ENCODE measurements at regions of chr2 and their contacts with region 1.

Region 1: DNA sequence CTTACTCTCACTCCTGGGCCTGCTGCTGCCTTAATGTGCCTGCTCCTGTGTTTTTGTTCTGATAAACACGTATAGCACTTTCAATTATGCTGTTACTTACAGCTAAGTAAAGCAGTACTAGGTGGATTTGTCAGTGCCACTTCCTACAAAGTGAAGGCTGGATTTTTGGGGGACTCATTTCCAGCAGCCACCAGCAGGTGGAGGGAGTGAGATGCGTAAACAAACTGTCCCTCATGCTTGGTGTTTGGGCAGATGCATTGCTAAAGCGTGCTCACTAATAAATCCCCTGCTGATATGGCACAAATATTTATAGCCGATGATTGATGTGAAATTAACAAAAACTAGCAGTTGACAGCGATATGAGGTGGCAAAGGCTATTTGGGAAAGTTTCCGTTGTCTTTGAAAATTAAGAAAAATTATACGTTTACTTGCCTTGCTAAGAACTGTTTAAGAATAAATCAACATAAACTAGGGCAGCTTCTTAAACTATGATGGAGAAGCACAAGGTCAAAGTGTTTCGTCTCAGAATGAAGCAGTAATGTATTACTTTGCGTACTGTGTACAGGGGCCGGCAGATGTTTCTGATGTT is 101.7 kb downstream of the AGAP1 start:
- DNase-seq: no peak
- H3K4me3 ChIP-seq: no peak overlapping the region
- CTCF ChIP-seq: peak; percentile 87

Region 2: GRCh38 chr2:235116885-235117492 is 478.5 kb before region 1 on chr2:
- CTCF ChIA-PET with region 1: interaction called, 16 read pairs
- POLR2A ChIA-PET with region 1: no interaction called
- DNase-seq: no peak
- H3K4me3 ChIP-seq: no peak overlapping the region
- CTCF ChIP-seq: peak; percentile 22

Region 3: DNA sequence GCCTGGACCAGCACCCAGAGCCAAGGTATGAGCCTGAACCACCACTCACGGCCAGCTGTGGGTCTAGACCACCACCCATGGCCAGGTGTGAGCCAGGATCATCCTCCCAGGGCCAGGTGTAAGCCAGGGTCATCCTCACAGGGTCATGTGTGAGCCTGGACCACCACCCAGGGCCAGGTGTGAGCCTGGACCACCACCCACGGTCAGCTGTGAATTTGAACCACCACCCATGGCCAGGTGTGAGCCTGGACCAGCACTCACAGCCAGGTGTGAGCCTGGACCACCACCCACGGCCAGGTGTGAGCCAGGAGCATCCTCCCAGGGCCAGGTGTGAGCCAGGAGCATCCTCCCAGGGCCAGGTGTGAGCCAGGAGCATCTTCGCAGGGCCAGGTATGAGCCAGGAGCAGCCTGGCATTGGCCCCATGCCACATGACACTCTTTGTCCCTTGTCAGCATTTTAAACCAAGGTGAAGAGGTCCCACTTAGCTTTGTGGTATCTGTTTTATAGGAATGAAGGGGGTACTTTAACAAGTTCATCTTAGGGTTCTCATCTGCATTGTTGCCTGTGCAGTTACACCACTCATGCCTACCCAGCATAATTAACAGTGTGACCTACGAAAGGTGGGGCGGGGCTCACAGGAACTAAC is 30.5 kb before region 1 on chr2:
- CTCF ChIA-PET with region 1: interaction called, 137 read pairs
- POLR2A ChIA-PET with region 1: no interaction called
- DNase-seq: no peak
- H3K4me3 ChIP-seq: no peak overlapping the region
- CTCF ChIP-seq: no peak

Region 4: GRCh38 chr2:235651643-235652042 is 56.1 kb after region 1 on chr2:
- CTCF ChIA-PET with region 1: interaction called, 10 read pairs
- POLR2A ChIA-PET with region 1: no interaction called
- DNase-seq: no peak
- H3K4me3 ChIP-seq: no peak overlapping the region
- CTCF ChIP-seq: no peak

Region 5: DNA sequence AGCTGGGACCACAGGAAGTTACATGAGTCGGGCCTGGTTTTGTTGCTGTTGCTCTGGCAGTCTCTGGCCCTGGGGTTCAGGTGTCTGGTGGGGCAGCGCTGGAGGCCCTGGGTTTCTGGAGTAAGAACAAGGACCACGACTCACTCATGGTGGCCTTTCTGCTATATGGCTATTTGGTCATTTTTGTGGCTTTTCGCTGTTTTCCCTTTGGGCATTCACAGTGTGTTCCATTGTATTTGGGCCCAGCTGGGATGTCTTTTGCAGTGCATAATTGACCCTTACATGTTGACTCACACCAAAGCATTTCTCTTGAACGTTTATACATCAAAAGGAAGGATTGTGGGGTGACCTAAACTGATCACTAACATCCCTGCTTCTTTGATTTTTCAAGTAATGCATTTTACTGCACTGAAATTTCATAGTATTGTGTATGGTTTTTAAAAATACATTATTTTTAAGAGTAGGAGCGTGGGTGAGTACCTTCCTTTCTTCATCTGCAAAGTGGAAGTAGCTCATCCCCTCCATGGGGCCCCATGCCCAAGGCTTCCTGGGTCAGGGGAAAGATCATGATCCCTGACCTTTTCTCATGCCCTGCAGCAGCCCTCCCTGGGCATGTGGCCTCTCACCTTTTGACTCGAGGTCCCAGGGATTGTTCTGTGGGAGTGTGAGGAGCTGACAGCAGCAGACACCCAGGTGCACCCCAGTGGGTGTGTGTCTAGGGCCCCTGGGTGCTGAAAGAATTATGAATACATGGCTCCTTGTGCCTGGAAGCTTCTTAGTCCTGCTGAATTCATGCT is 123.8 kb after region 1 on chr2:
- CTCF ChIA-PET with region 1: interaction called, 13 read pairs
- POLR2A ChIA-PET with region 1: no interaction called
- DNase-seq: no peak
- H3K4me3 ChIP-seq: no peak overlapping the region
- CTCF ChIP-seq: no peak

Region 6: GRCh38 chr2:235746257-235747084 is 151.0 kb after region 1 on chr2:
- CTCF ChIA-PET with region 1: interaction called, 484 read pairs
- POLR2A ChIA-PET with region 1: no interaction called
- DNase-seq: peak; percentile 63
- H3K4me3 ChIP-seq: no peak overlapping the region
- CTCF ChIP-seq: peak; percentile 84